H1 (cell line): ENCODE measurements at regions of chr5 and their contacts with region 1.

Region 1: DNA sequence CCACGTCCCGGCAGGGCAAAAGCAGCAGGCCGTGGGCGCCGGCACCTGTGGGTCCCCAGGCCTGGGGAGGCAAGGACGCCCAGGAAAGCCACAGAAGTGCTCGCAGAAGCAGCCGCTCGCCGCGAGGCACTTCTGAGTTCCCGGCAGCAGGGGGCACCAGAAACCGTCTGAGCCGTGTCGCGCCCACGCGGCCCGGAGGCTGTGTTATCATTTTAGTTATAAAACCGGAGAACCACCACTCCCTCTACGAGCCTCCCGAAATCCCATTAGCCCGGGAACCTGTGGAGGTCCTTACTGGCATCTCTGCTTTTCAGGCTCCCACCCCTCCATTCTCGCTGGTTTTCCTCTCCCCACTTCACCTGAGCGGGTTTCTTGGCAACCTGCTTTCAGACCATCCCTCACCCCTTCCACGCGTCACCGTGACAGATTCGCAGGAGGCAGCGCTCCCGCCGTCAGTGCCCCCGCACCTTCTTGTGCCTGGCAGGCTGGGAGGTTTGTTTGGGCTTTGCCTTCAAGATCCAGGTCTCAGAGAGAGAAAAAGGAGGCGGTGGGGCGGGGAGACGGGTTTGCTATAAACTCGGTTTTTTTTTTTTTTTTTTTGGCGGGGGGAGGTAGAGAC is 2.3 kb downstream of the GDNF start:
- DNase-seq: peak in 1 of 2 experiments; percentile 90
- H3K4me3 ChIP-seq: peak overlapping the region; percentile 35 to 59 (median 48)
- H3K27ac ChIP-seq: no peak overlapping the region
- H3K4me1 ChIP-seq: peaks cover 8 to 31% (median 16%) of the 10 kb centered on the region in 4 experiments
- H3K27me3 ChIP-seq: peaks cover 59 to 98% (median 92%) of the 10 kb centered on the region in 4 experiments
- CTCF ChIP-seq: peak in 2 of 3 experiments; percentile 70 to 73; a peak in 3 of 4 replicates
- EP300 ChIP-seq: no peak
- POLR2A ChIP-seq: no peak
- RAD21 ChIP-seq: peak; percentile 78 to 84

Region 2: GRCh38 chr5:37847978-37848425 is 10.5 kb after region 1 on chr5:
- CTCF ChIA-PET with region 1: interaction called, 11 read pairs
- POLR2A ChIA-PET with region 1: interaction called, 4 read pairs
- DNase-seq: no peak
- H3K4me3 ChIP-seq: no peak overlapping the region; a peak in 1 of 8 replicates
- H3K27ac ChIP-seq: no peak overlapping the region
- H3K4me1 ChIP-seq: peaks cover 10 to 20% (median 15%) of the 10 kb centered on the region in 4 experiments; a peak in 6 of 7 replicates
- H3K27me3 ChIP-seq: peaks cover 0 to 6% (median 0%) of the 10 kb centered on the region in 4 experiments; a peak in 3 of 7 replicates
- CTCF ChIP-seq: no peak
- EP300 ChIP-seq: no peak
- POLR2A ChIP-seq: no peak
- RAD21 ChIP-seq: no peak